ENCODE measurements at regions of chr10 and their contacts with region 1.

Region 1: DNA sequence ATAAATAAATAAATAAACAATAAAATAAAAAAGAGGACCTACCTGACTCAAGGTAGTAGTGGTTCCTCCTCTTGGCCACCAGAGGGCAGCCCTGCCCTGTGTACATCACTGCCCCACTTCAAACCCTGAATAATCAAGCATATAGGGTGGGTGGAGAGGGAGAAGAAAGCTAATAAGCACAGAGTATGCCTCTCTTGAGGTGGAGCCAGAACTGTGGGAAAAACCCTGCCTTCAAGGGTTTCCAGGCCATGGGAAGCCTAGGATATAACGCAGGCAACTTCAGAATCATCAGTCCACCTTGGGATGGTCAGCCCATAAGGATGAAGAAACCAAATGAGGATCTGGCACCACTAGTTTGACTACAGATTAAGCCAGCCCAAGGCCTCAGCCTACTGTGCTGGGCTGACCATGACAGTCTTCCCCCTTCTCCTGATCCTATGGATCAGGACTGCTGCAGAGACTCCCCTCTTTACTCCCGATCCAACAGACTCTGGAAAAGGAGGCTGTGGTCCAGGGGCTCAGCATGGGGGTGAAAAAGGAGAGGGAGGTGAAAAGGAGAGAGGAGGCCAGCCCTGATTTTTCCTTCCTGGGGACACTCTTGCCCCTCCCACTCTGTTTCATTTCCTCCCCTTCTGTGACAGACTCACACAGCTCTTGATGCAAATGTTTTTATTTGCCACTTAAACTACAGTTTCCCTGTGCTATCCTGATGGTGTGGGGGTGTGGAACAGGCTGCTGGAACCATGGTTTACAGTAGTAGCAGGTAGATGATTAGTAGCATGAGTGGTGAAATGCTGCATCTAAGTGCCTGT is 10.1 kb downstream of the AVPI1 start:
- DNase-seq: peak in 1 of 2 experiments; percentile 55
- H3K4me3 ChIP-seq: no peak overlapping the region
- H3K27ac ChIP-seq: no peak overlapping the region
- H3K4me1 ChIP-seq: no peaks in the 10 kb centered on the region
- H3K27me3 ChIP-seq: no peaks in the 10 kb centered on the region
- CTCF ChIP-seq: peak; percentile 75 to 85 (median 77)
- EP300 ChIP-seq: no peak
- POLR2A ChIP-seq: peak in 1 of 2 experiments; percentile 47; a peak in 1 of 3 replicates
- RAD21 ChIP-seq: peak; percentile 84 to 85

Region 2: DNA sequence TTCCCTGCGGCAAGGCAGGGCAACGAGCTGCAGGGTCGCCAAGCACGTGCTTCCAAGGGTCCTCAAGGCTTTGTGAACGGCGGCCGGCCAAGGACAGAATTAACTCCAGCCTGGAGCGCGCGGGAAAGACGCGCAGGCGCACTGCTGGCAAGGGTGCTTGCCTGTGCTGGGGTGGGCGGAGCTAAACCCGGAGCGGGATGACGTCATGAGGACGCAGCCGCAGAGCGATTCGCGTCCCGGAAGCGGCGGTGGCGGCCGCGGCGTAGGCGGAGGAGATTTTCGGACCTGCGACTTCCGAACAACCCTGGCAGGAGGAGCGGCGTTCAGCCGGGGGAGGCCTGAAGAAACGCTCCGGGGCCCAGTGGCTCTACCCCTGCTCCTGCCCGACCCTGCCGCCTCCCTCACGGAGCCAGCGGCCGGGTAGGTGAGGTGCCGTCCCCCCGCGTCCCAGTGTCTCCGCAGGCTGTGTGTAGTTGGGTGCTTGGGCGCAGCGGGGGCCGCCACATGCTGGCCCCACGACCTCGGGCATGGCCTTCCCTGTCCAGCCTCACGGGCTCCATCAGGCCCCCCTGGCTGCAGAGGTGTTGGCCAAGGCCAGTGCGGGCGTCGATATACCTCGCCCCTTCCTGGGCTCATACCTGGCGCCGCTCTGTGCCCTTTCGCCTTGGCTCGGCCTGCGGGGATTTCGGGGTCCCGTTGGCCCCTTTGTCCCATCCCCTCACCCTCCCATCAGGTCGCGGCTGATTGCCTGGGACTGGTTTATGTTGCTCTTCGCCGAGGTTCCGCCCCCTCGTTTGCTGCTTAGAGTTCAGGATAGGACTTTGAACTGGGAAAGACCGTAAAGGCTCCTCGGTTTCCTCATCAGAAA is 60.2 kb after region 1 on chr10 and contains the start of gene ZFYVE27:
- CTCF ChIA-PET with region 1: interaction called, 127 read pairs
- POLR2A ChIA-PET with region 1: interaction called, 3 read pairs
- DNase-seq: peak; percentile 97 to 99
- H3K4me3 ChIP-seq: peak within 1 kb of the TSS; percentile 79 to 96 (median 89)
- H3K27ac ChIP-seq: peak within 1 kb of the TSS; percentile 73; the same call in 1 of the 2 replicates
- H3K4me1 ChIP-seq: peaks cover 0 to 6% (median 3%) of the 10 kb centered on the region in 4 experiments; a peak in 5 of 7 replicates
- H3K27me3 ChIP-seq: peaks cover 12 to 21% (median 17%) of the 10 kb centered on the region in 4 experiments
- CTCF ChIP-seq: no peak
- EP300 ChIP-seq: no peak
- POLR2A ChIP-seq: peak in 1 of 2 experiments; percentile 83; a peak in 2 of 3 replicates
- RAD21 ChIP-seq: no peak
- total RNA-seq, gene ZFYVE27: 19.8 and 22.7 TPM in 2 replicates

Measured in H1 (cell line).